Activated CD8-positive, alpha-beta memory T cell treated with anti-CD3 and anti-CD28 coated beads, Interleukin-2, amount 10 ng/mL, durations not matched to agents 7 days and 5 days (primary cell): ENCODE measurements at regions of chr17 and their contacts with region 1.

Region 1: DNA sequence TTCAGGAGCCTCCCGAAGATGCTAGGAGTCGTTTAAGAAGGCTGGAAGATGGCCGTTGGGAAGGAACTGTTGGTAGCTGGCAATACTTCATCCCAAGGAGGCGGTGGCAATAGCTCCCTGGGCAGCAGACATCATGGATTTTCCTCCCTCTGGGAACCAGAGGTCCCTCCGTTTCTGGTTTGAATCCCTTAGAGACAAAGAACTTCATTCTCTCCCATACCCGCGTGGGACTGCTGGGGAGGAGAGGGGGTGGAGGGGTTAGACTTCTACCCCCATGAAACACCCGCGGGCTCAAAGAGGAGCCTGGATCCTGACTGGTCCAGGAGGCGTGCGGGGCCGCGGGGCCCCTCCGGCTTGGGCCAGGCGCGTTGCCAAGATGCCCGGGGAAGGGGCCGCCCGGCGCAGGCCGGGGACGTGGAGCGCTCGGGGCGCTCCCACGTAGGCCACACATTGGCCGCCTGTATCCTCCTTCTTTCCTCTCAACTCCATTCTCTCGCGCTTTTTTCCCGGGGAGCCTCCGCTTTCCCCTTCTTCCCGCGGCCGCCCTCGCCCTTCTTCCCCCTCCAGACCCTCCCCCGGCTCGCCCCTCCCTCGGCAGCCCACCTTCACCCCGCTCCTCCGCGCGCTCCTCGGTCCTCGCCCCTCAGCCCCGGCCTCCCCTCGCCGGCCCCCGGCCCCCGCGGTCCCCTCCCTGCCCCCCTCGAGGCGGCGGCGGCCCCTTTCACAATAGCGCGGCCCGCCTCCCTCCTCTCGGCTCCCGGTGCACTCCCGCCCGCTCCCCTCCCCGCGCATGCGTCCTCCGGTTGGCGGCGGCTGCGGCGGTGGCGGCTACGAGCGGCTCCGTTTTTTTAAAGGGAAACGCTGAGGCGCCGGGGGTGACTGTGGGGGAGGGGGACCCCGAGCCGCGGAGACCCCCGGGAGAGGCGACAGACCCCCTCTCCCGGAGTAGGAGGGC is at the start of gene MSL1:
- DNase-seq: peak; percentile 86
- ATAC-seq: peak; percentile 73
- H3K4me3 Mint-ChIP-seq: peak within 1 kb of the TSS; percentile 74
- H3K27ac Mint-ChIP-seq: peak within 1 kb of the TSS; percentile 74
- H3K4me1 Mint-ChIP-seq: peaks cover 30% of the 10 kb centered on the region
- H3K27me3 Mint-ChIP-seq: no peaks in the 10 kb centered on the region
- total RNA-seq, gene MSL1: 91.4 to 94.7 TPM

Region 2: DNA sequence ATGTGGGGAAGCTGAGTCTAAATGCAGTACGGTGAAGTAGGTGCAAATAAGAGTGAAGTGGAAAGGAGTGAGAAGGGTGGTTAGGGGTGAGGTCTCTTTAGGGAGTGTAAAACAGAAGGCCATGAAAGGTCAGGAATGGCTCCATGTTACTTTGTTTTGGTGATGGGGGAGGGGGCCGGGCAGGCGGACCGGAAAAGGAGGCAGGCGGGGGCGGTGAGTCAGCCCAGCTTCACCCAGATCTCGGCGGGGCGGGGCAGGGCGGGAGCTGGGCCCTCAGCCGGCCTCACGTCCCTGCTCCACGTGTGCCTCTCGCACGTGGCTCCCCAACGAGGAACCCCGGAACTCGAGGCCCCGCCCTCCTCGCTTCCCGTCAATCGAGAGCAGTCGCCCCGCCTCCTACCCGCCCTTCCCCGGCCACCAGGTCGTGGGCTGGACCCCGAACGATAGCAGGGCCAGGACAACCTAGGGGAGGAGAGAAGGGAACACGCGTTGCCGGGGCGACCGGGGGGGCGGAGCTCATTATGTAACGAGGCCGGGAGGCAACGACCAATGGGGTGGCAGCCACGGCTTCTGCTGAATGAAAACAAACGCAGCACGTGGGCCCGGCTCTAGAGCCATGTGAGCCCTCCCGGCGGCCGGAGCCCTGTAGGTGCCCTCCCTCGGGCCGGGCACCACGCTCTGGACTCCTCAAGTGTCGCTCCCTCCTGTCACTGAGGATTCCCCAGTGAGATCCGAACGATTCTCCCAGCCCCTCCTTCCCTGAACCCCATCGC is 22.4 kb before region 1 on chr17:
- CTCF ChIA-PET with region 1: interaction called, 10 read pairs
- DNase-seq: peak; percentile 99
- ATAC-seq: peak; percentile 65
- H3K4me3 Mint-ChIP-seq: peak overlapping the region; percentile 73
- H3K27ac Mint-ChIP-seq: peak overlapping the region; percentile 85
- H3K4me1 Mint-ChIP-seq: peaks cover 86% of the 10 kb centered on the region
- H3K27me3 Mint-ChIP-seq: no peaks in the 10 kb centered on the region

Region 3: GRCh38 chr17:40139566-40140058 is 18.2 kb after region 1 on chr17:
- CTCF ChIA-PET with region 1: interaction called, 27 read pairs
- DNase-seq: no peak
- ATAC-seq: peak; percentile 1
- H3K4me3 Mint-ChIP-seq: peak overlapping the region; percentile 88
- H3K27ac Mint-ChIP-seq: peak overlapping the region; percentile 90
- H3K4me1 Mint-ChIP-seq: peaks cover 29% of the 10 kb centered on the region
- H3K27me3 Mint-ChIP-seq: no peaks in the 10 kb centered on the region

Region 4: DNA sequence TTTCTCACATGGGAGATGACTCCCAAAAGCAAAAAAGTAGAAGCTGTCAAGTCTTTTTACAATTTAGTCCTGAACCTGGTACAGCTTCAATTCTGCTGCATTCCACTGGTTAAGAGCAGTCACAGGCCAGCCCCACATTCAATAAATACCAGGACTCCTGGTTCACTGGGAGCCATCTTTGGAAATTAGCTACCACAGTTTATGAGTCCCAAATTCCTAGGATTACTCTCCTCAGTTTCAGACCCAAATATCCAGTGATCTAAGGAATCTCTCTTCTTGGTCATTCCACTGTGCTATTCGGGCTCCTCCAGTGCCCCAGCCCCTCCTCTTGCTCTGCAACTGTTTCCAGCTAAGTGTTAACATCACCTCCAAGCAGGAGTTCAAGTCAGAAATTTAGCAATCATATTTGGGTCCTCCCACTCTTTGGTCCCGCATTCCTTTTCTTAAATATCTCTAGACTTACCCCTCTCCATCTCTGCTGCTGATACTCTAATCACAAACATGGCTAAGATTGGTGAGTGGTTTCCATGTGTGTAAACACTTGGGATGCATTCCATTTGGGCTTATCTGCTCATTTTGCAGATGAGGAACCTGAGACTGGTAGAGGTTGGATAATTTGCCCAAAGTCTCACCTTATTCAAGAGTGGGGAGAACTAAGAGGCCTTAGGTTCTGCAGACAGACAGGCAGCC is 88.1 kb after region 1 on chr17:
- CTCF ChIA-PET with region 1: no interaction called
- DNase-seq: no peak
- ATAC-seq: no peak
- H3K4me3 Mint-ChIP-seq: no peak overlapping the region
- H3K27ac Mint-ChIP-seq: no peak overlapping the region
- H3K4me1 Mint-ChIP-seq: no peaks in the 10 kb centered on the region
- H3K27me3 Mint-ChIP-seq: peaks cover 4% of the 10 kb centered on the region